Psoas muscle (tissue), 8 donors: ENCODE measurements at regions of chr12 and their contacts with region 1.

Region 1: DNA sequence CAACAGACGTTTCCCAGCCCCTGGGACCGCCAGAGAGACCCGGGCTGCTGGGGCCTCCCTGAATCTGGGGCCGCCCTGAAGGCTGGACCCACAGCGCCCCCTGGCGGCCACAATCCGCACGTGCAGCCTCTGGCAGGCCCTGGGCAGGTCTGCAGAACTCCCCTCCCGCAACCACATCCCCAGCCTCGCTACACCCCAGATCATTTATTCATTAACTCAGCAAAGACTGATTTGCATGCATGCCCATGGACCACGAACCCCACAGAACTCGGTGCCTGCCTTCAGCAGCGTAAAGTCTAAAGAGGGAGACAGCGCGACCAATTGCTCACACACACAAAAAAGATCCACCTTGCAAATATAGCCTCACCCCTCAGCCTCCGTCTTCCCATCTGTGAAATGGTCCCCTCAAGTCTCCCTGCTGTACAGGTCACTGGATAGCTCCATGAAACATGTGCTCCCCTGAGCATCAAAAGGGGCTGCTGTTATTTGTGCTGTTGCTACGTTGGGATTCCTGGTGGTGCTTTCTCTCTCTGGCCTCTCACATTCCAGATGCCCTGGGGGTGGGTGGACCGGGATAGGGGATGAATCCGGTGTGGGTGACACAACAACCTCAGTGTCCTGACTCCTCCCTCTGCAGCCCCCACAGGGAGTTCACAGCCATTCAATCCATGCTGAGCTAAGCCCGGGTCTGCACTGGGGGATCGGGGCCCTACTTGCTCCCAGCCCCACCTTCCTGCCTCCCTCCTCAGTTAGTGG is 96.4 kb downstream of the SCARB1 start:
- DNase-seq: peak; percentile 81 to 88
- ATAC-seq: peak; percentile 72 to 85 (median 76)
- H3K4me3 ChIP-seq: no peak overlapping the region
- H3K27ac ChIP-seq: peak overlapping the region; percentile 86
- H3K4me1 ChIP-seq: peaks cover 33% of the 10 kb centered on the region
- H3K27me3 ChIP-seq: no peaks in the 10 kb centered on the region
- CTCF ChIP-seq: peak; percentile 100

Region 2: GRCh38 chr12:124053851-124054250 is 713.4 kb before region 1 on chr12:
- intact Hi-C with region 1: loop called (anchors 5 kb)
- DNase-seq: peak; percentile 24 to 65
- ATAC-seq: peak; percentile 80 to 93 (median 91)
- H3K4me3 ChIP-seq: no peak overlapping the region
- H3K27ac ChIP-seq: no peak overlapping the region
- H3K4me1 ChIP-seq: no peaks in the 10 kb centered on the region
- H3K27me3 ChIP-seq: peaks cover 0 to 2% (median 0%) of the 10 kb centered on the region in 3 donors
- CTCF ChIP-seq: peak; percentile 71

Region 3: DNA sequence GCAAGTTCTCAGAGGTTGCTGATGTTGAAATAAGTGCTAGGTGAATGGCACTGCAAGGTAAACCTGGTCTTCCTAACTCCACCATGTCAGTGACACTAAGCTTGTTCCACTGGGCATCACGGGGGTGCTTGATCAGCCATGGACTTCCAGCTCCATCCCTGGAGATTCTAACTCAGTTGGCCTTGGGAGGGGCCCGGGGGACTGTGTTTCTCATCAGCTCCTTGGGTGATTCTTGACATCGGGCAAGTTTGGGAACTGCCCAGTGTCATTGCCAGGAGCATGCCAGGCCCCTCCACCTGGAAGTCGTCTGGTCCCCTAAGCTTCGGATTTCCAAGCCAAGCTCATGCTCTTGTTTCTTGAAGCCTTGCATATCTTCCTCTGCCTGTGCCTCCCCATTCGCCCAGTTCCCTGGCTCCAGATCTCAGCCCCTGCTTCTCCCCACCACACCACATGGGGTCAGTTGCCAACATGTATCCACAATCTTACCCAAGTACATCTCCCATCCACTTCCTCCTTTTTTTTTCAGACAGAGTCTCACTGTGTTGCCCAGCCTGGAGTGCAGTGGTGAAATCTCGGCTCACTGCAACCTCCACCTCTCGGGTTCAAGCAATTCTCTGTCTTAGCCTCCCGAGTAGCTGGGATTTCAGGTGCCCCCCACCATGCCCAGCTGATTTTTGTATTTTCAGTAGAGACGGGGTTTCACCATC is 503.0 kb before region 1 on chr12:
- intact Hi-C with region 1: no loop called
- DNase-seq: no peak
- ATAC-seq: no peak
- H3K4me3 ChIP-seq: no peak overlapping the region
- H3K27ac ChIP-seq: no peak overlapping the region
- H3K4me1 ChIP-seq: no peaks in the 10 kb centered on the region
- H3K27me3 ChIP-seq: peaks cover 0 to 6% (median 2%) of the 10 kb centered on the region in 3 donors
- CTCF ChIP-seq: no peak

Region 4: DNA sequence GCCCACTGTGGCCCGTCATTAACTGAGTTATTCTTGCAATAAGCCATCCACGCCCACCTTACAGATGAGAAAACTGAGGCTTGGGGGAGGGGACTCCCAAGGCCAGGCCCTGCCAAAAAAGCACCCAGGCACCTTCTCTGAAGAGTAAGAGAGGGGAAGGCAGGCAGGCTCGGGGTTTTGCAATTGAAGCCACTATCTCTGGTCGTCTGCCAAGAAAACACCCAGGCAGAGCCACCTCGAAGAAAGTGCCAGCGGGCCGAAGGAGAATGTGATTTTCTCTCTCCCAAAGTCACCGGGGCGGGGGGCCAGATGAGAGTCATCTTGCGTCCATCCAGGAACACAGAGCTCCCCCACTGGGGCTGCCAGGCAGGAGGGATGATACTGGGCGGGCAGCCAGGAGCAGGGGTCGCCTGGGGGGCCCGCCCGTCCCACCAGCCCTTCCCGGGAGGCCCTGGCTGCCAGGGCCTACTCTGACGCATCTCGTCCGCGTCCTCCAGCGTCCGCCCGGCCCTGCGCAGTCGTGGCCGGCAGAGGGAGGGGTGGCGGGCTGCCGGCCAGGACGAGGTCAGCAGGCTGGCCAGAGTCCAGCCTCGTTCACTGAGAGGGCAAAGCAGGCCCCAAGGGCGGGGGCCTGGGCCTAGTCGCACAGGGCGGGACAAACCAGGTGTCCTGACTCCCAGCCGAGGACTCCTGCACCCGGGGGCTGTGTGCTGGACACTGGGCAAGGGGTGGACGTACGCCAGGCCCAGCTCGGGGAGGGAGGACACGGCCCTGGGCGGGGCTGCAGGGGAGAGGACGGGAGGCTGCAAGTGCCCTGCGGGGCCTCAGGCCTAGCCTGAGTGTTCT is 398.0 kb before region 1 on chr12:
- intact Hi-C with region 1: loop called in 1 of 2 experiments (anchors 5 kb)
- DNase-seq: peak; percentile 94 to 99
- ATAC-seq: peak; percentile 85 to 87 (median 86)
- H3K4me3 ChIP-seq: peak overlapping the region; percentile 35
- H3K27ac ChIP-seq: peak overlapping the region; percentile 95
- H3K4me1 ChIP-seq: peaks cover 71% of the 10 kb centered on the region
- H3K27me3 ChIP-seq: no peaks in the 10 kb centered on the region
- CTCF ChIP-seq: peak; percentile 56

Region 5: DNA sequence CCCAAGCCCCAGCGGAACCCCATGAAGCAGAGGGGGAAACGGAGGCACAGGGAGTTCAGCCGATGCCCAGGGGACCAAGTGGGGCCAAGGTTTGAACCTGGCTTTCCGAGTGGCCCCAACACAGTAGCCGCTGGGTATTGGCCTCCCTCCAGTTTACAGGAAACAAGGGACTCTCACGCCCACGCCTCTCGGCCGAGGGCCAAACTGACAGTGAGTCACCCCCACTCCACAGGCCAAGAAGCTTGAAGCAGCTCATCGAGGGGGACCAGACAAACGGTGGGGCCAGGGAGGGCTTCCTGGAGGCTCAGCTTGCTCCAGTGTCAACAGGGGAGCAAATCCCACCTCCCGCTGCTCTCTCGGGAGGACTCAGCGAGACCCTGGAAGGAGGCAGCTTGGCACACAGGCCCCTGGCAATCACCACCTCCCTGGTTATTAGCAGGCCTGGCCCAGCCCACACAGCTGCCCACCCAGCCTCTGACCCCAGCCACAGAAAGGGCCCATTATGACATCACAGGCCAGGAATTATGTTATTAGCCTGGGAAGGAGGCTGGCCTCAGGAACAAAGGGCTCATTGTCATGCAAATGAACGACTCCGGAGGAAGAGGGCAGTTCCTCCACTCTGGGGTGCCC is 254.5 kb before region 1 on chr12:
- intact Hi-C with region 1: loop called in 1 of 2 experiments (anchors 5 kb)
- DNase-seq: peak; percentile 91 to 93
- ATAC-seq: no peak
- H3K4me3 ChIP-seq: no peak overlapping the region
- H3K27ac ChIP-seq: peak overlapping the region; percentile 58
- H3K4me1 ChIP-seq: peaks cover 86% of the 10 kb centered on the region
- H3K27me3 ChIP-seq: no peaks in the 10 kb centered on the region
- CTCF ChIP-seq: no peak

Region 6: DNA sequence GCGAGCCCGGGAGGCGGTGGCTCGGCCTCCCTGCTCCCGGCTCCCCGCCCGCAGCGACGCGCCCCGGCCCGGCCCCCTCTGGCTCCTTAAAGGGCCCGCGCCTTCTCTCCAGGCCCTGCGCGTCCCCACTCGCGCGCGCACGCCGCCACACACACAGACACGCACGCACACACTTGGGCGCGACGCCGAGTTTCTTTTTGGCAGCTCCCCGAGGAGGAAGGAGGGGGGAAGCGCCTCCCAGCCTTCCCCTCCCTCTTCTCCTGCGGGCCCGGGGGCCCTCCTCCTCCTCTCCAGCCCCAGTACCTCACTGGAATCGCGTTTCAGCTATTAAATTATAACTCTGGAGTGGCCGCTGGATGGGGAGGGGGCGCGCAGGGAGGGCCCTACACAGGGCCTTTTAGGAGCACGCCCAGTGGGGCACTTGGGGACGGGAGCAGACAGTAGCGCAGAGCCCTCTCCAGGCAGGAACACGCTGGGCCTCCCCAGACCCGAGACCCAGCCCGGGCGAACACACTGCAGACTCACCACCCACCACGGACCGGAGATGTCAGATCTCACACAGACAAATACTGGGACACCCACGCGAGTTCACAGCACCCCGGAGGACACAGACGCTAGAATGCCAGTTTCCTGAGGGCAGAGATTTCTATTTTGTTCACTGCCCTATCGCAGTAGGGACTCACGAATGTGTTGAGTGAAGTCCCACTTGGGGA is 199.4 kb before region 1 on chr12:
- intact Hi-C with region 1: loop called (anchors 1 to 5 kb)
- DNase-seq: peak; percentile 95 to 96
- ATAC-seq: peak; percentile 82 to 90 (median 86)
- H3K4me3 ChIP-seq: peak overlapping the region; percentile 65
- H3K27ac ChIP-seq: peak overlapping the region; percentile 85
- H3K4me1 ChIP-seq: peaks cover 29% of the 10 kb centered on the region
- H3K27me3 ChIP-seq: no peaks in the 10 kb centered on the region
- CTCF ChIP-seq: no peak

Region 7: GRCh38 chr12:124609041-124609995 is 157.9 kb before region 1 on chr12:
- intact Hi-C with region 1: no loop called
- DNase-seq: peak; percentile 70 to 87
- ATAC-seq: peak; percentile 30 to 60 (median 41)
- H3K4me3 ChIP-seq: no peak overlapping the region
- H3K27ac ChIP-seq: no peak overlapping the region
- H3K4me1 ChIP-seq: no peaks in the 10 kb centered on the region
- H3K27me3 ChIP-seq: no peaks in the 10 kb centered on the region
- CTCF ChIP-seq: no peak

Region 8: DNA sequence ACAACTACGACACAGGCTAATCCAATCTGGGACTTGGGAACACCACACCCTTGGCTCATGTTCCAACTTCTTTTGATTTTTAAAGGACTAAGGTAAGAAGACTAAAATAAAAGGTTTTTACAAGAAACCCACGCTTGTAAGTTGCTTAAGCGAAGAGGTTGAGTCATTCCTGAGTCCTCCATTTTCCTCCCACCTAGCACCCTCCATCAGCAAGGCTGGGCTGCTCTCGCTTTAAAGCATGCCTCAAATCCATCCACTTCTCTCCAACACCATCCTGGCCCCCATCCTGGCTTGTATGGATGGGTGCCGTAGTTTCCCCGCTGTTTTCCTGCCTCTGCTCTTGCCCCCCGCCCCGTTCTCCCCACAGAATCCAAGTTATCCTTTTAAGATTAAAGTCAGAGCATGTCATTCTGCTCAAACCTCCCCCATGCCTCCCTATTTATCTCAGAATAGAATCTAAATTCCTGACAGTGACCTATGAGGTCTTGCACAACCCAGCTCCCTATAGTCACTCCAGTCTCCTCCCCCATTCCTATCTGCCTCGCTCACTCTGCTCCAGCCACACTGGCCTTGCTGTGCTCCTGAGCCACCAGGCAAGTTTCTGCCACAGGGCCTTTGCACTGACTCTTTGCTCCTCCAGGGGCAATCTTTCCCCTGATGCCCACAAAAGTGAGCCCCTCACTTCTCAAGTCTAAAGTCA is 61.9 kb after region 1 on chr12:
- intact Hi-C with region 1: no loop called
- DNase-seq: no peak
- ATAC-seq: peak; percentile 65 to 87 (median 68)
- H3K4me3 ChIP-seq: no peak overlapping the region
- H3K27ac ChIP-seq: no peak overlapping the region
- H3K4me1 ChIP-seq: peaks cover 15% of the 10 kb centered on the region
- H3K27me3 ChIP-seq: no peaks in the 10 kb centered on the region
- CTCF ChIP-seq: no peak